ENCODE measurements at regions of chr9 and their contacts with region 1.

Region 1: GRCh38 chr9:3746296-3747275 is 220.8 kb upstream of the RFX3 start:
- DNase-seq: no peak
- ATAC-seq: no peak
- H3K4me3 ChIP-seq: no peak overlapping the region
- H3K4me3 Mint-ChIP-seq: no peak overlapping the region
- H3K27ac ChIP-seq: no peak overlapping the region
- H3K27ac Mint-ChIP-seq: no peak overlapping the region
- H3K4me1 ChIP-seq: no peaks in the 10 kb centered on the region
- H3K4me1 Mint-ChIP-seq: no peaks in the 10 kb centered on the region
- H3K27me3 ChIP-seq: no peaks in the 10 kb centered on the region
- H3K27me3 Mint-ChIP-seq: peaks cover 25% of the 10 kb centered on the region
- CTCF ChIP-seq: no peak

Region 2: GRCh38 chr9:3682186-3682585 is 64.4 kb before region 1 on chr9:
- CTCF ChIA-PET with region 1: no interaction called
- POLR2A ChIA-PET with region 1: no interaction called
- intact Hi-C with region 1: loop called (anchors 10 kb)
- DNase-seq: no peak
- ATAC-seq: no peak
- H3K4me3 ChIP-seq: no peak overlapping the region
- H3K4me3 Mint-ChIP-seq: no peak overlapping the region
- H3K27ac ChIP-seq: no peak overlapping the region
- H3K27ac Mint-ChIP-seq: no peak overlapping the region
- H3K4me1 ChIP-seq: no peaks in the 10 kb centered on the region
- H3K4me1 Mint-ChIP-seq: no peaks in the 10 kb centered on the region
- H3K27me3 ChIP-seq: no peaks in the 10 kb centered on the region
- H3K27me3 Mint-ChIP-seq: no peaks in the 10 kb centered on the region
- CTCF ChIP-seq: no peak

Measured in B cell (primary cell).